SK-N-SH (cell line): ENCODE measurements at regions of chr7 and their contacts with region 1.

Region 1: DNA sequence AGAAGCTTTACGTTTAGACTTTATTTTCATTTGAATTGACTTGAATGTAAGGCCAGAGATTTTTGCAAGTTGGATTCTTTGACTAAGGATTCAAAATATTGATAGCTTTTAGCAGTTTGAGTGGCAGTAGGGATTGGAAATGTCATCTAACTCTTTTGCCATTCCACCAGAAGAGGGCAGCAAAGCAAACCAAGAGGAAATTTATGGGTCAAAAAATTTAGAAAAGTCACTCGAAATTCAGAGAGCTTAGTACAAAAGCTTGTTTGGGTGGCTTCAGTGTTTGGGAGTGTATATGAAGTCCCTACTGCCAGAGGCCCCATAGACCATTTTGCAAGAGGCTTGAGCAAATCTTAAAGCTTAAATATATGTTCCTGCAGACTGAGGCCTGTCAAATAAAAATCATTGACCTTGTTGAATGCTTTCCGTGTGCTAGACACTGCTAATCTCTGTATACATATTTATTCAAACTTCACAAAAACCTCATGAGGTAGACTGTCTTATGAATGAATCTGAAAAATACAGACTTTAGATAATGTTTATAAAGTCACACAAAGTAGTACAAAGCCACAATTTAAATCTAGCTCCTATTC is 44.6 kb upstream of the RSBN1L start:
- DNase-seq: peak; percentile 61
- H3K4me3 ChIP-seq: no peak overlapping the region; a peak in 1 of 4 replicates
- H3K27ac ChIP-seq: no peak overlapping the region
- H3K4me1 ChIP-seq: peaks cover 0 to 7% of the 10 kb centered on the region in 2 experiments; a peak in 1 of 4 replicates
- H3K27me3 ChIP-seq: no peaks in the 10 kb centered on the region
- CTCF ChIP-seq: peak; percentile 97
- EP300 ChIP-seq: no peak
- RAD21 ChIP-seq: peak; percentile 73

Region 2: DNA sequence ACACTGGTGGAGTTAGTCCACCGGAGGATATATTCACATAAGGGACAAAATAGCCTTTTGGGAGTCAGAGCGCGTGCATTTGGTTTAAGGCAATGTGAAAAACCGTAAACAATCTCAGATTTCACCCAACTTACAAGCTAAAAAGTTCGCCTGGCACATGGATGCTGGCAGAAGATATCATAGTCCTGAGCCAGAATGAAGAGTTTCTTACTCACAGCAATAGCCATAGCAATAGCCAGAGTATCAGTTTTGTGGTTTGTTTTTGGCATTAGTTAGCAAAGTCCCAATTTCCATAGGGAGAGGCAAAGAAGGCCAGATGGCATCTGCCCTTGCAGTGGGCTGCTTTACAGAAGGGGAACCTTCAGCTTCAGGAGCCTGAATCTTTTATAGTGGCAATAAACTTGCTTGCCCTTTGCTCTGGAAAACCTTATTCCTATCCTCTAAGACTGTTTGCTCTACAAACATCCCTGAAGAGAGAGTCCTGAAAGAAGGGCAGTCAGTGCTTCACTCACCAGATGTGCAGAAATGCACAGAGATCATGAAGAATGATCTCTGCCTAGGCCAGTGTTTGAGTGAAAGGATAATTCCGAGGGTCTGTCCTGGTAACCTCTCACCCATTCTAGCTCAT is 15.9 kb after region 1 on chr7:
- CTCF ChIA-PET with region 1: interaction called, 32 read pairs
- POLR2A ChIA-PET with region 1: no interaction called
- DNase-seq: no peak
- H3K4me3 ChIP-seq: no peak overlapping the region
- H3K27ac ChIP-seq: no peak overlapping the region
- H3K4me1 ChIP-seq: no peaks in the 10 kb centered on the region
- H3K27me3 ChIP-seq: no peaks in the 10 kb centered on the region
- CTCF ChIP-seq: no peak
- EP300 ChIP-seq: no peak
- RAD21 ChIP-seq: no peak

Region 3: DNA sequence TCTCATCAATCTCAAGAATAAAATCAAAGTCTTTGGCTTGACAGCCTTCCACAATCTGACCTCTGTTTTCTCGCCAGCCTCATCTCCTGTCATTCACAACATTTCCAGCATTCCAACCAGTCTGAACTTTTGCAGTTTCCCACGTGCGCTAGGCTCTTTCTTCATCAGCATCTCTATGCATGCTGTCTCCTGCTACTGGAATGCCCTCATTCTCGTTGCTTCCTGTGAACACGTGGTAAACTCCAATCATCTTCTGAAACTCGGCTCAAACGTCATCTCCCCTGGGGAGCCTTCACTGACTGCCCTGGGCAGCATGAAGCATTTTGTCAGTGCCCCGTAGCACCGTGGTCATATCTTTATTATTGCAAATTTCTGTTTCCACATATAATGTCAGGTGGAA is 32.4 kb after region 1 on chr7:
- CTCF ChIA-PET with region 1: interaction called, 15 read pairs
- POLR2A ChIA-PET with region 1: no interaction called
- DNase-seq: no peak
- H3K4me3 ChIP-seq: no peak overlapping the region
- H3K27ac ChIP-seq: no peak overlapping the region
- H3K4me1 ChIP-seq: 0 out of 4 replicates have a peak, but pooled peaks cover 0 to 10% of the 10 kb centered on the region in 2 experiments
- H3K27me3 ChIP-seq: no peaks in the 10 kb centered on the region
- CTCF ChIP-seq: no peak
- EP300 ChIP-seq: no peak
- RAD21 ChIP-seq: no peak

Region 4: DNA sequence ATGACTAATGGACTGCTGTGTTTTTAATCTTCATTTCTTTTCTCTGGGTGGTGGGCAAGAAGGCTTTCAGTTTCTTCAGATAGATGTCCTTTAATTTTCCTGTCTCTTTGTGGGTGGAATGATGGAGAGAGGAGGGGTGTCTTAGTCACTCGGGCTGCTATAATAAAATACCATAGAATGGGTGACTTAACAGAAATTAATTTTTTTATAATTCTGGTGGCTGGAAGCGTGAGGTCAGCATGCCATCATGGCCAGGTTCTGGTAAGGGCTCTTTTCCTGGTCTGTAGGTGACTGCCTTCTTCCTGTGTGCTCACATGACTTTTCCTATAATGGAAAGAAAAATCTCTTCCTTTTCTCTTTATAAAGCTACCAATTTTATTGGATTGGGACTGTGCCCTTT is 50.8 kb after region 1 on chr7:
- CTCF ChIA-PET with region 1: interaction called, 14 read pairs
- POLR2A ChIA-PET with region 1: no interaction called
- DNase-seq: no peak
- H3K4me3 ChIP-seq: no peak overlapping the region
- H3K27ac ChIP-seq: peak overlapping the region in 1 of 2 experiments; percentile 43; a peak in 2 of 4 replicates
- H3K4me1 ChIP-seq: peaks cover 3 to 10% of the 10 kb centered on the region in 2 experiments; a peak in 2 of 4 replicates
- H3K27me3 ChIP-seq: no peaks in the 10 kb centered on the region
- CTCF ChIP-seq: no peak
- EP300 ChIP-seq: no peak
- RAD21 ChIP-seq: no peak

Region 5: GRCh38 chr7:77747178-77747577 is 95.5 kb after region 1 on chr7:
- CTCF ChIA-PET with region 1: interaction called, 392 read pairs
- POLR2A ChIA-PET with region 1: no interaction called
- DNase-seq: no peak
- H3K4me3 ChIP-seq: no peak overlapping the region
- H3K27ac ChIP-seq: no peak overlapping the region
- H3K4me1 ChIP-seq: peaks cover 2 to 5% of the 10 kb centered on the region in 2 experiments; a peak in 2 of 4 replicates
- H3K27me3 ChIP-seq: no peaks in the 10 kb centered on the region
- CTCF ChIP-seq: no peak
- EP300 ChIP-seq: no peak
- RAD21 ChIP-seq: no peak

Region 6: DNA sequence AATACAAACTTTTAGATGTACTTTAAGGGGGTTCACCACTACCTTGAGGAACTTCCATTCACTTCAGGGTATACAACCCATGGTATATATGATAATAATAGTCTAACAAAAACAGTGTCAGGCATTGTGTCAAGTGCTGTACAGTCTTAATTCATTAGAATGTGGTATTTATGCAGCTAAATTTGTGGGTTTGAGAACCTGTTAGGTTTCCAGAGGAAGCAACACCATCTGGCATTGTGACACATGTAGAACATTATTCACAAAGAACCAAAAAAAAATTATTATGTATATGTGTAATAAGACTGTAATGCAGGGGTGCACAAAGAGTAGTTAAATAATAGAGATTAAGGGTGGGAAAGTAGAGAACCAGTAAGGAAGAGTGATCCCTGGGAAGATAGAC is 120.2 kb after region 1 on chr7:
- CTCF ChIA-PET with region 1: interaction called, 18 read pairs
- POLR2A ChIA-PET with region 1: no interaction called
- DNase-seq: no peak
- H3K4me3 ChIP-seq: no peak overlapping the region
- H3K27ac ChIP-seq: no peak overlapping the region
- H3K4me1 ChIP-seq: no peaks in the 10 kb centered on the region
- H3K27me3 ChIP-seq: no peaks in the 10 kb centered on the region
- CTCF ChIP-seq: no peak
- EP300 ChIP-seq: no peak
- RAD21 ChIP-seq: no peak